Activated B cell treated with CpG ODN at 0.5 μM for 24 hours (primary cell): ENCODE measurements at regions of chr6 and their contacts with region 1.

Region 1: DNA sequence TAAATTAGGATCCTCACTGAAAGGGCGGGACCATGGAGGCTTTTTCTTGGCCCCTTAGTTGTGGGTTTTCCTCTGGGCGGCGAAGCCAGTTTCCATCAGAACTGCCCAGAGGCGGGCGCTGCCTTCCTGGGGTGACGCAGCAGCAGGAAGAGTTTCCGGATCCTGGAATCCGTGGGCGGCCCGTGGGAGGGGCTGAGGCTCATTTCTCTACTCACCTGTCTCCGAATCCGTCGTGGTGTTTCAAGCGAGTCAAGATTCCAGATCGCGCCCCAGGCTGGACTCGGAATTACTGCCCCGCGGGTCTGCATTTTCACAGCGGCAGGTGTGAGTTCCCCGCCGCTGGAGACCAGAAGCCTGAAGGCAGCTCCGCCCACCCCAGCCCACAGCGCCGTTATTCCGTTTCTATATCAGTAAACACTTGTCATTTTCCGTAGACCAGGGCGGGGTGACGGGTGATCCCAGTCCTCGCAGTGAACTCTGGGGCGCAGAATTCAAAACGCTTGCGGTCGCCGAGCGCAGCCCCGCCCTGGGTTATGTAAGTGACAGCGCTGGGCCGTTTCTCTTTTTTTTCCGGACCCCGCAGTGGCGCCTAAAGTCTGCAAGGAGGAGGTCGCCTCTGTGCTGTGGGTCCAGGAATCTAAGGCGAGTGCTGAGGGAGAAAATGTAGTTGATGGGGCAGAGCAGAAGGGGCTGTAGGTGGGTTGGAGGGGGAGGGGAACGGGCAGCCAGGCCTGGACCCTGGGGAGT is 27.2 kb upstream of the POU5F1 start:
- DNase-seq: peak; percentile 80
- ATAC-seq: peak; percentile 78
- H3K4me3 Mint-ChIP-seq: peak overlapping the region; percentile 96
- H3K27ac Mint-ChIP-seq: peak overlapping the region; percentile 99
- H3K4me1 Mint-ChIP-seq: peaks cover 49% of the 10 kb centered on the region
- H3K27me3 Mint-ChIP-seq: no peaks in the 10 kb centered on the region
- CTCF ChIP-seq: no peak

Region 2: GRCh38 chr6:31139599-31139998 is 58.1 kb before region 1 on chr6:
- CTCF ChIA-PET with region 1: interaction called, 37 read pairs
- POLR2A ChIA-PET with region 1: interaction called, 19 read pairs
- intact Hi-C with region 1: loop called (anchors 1 kb)
- DNase-seq: no peak
- ATAC-seq: no peak
- H3K4me3 Mint-ChIP-seq: no peak overlapping the region
- H3K27ac Mint-ChIP-seq: no peak overlapping the region
- H3K4me1 Mint-ChIP-seq: peaks cover 7% of the 10 kb centered on the region
- H3K27me3 Mint-ChIP-seq: no peaks in the 10 kb centered on the region
- CTCF ChIP-seq: no peak

Region 3: DNA sequence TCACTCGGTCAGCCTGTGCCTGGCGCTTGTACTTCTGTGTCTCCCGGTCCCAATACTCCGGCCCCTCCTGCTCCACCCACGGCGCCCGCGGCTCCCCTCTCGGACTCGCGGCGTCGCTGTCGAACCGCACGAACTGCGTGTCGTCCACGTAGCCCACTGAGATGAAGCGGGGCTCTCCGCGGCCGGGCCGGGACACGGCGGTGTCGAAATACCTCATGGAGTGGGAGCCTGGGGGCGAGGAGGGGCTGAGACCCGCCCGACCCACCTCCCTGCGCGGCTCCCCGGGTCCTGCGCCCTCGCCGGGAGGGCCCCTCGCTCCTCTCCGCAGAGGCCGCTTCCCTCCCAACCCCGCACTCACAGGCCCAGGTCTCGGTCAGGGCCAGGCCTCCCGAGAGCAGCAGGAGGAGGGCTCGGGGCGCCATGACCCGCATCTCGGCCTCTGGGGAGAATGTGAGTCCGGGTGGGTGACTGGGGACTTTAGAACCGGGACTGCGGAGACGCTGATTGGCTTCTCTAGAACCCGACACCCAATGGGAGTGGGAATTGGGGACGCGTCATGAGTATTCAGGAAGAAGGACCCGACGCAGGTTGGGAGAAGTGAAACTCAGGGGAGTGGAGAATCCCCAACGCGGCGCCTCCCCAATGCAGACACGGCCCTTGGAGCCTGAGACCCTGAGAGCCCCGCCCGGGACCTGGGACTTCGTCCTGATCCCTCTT is 74.1 kb after region 1 on chr6 and contains the start of gene HLA-C:
- CTCF ChIA-PET with region 1: interaction called, 4 read pairs
- POLR2A ChIA-PET with region 1: interaction called, 25 read pairs
- intact Hi-C with region 1: loop called (anchors 1 kb)
- DNase-seq: peak; percentile 77
- ATAC-seq: peak; percentile 87
- H3K4me3 Mint-ChIP-seq: peak within 1 kb of the TSS; percentile 90
- H3K27ac Mint-ChIP-seq: peak within 1 kb of the TSS; percentile 99
- H3K4me1 Mint-ChIP-seq: peaks cover 65% of the 10 kb centered on the region
- H3K27me3 Mint-ChIP-seq: no peaks in the 10 kb centered on the region
- CTCF ChIP-seq: no peak
- total RNA-seq, gene HLA-C: 762 and 793 TPM in 2 replicates

Region 4: DNA sequence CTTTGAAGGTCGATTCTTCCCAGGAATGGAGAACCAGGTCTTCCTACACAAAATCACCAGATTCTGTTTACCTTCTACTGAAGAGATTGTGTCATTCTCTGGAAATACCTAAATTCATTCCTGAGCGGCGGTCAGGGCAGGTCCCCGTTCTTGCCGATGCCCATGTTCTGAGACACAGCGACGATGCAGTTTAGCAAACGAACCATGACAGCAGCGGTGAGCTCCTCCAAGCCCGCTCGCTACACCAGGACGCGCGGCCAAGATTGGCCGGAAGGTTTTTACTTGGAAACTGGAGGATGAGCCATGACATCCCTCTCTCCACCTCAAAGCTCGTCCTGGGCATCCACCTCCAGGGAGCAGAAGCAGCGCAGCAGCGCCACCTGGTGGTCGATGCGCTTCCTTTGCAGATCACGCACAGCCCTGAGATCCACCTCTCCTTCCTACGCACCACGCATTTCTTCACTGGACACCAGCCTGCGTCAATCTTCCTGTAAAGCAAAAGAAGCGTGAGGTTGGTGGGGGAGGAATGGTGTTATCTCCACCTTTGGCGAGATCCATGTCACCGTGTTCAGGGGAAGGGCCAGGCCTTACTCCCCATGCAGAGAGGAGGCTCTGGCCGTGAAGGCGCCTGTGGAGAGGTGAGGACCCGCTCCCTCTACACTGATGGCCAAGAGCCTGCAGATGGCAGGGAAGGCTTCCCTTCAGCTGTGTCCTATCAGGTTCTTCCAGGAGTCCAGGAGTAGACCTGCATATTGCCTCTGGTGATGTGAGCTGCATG is 169.2 kb after region 1 on chr6:
- CTCF ChIA-PET with region 1: interaction called, 161 read pairs
- POLR2A ChIA-PET with region 1: interaction called, 55 read pairs
- intact Hi-C with region 1: loop called (anchors 1 kb)
- DNase-seq: peak; percentile 68
- ATAC-seq: peak; percentile 98
- H3K4me3 Mint-ChIP-seq: peak overlapping the region; percentile 84
- H3K27ac Mint-ChIP-seq: peak overlapping the region; percentile 43
- H3K4me1 Mint-ChIP-seq: peaks cover 8% of the 10 kb centered on the region
- H3K27me3 Mint-ChIP-seq: peaks cover 6% of the 10 kb centered on the region
- CTCF ChIP-seq: peak; percentile 61

Region 5: DNA sequence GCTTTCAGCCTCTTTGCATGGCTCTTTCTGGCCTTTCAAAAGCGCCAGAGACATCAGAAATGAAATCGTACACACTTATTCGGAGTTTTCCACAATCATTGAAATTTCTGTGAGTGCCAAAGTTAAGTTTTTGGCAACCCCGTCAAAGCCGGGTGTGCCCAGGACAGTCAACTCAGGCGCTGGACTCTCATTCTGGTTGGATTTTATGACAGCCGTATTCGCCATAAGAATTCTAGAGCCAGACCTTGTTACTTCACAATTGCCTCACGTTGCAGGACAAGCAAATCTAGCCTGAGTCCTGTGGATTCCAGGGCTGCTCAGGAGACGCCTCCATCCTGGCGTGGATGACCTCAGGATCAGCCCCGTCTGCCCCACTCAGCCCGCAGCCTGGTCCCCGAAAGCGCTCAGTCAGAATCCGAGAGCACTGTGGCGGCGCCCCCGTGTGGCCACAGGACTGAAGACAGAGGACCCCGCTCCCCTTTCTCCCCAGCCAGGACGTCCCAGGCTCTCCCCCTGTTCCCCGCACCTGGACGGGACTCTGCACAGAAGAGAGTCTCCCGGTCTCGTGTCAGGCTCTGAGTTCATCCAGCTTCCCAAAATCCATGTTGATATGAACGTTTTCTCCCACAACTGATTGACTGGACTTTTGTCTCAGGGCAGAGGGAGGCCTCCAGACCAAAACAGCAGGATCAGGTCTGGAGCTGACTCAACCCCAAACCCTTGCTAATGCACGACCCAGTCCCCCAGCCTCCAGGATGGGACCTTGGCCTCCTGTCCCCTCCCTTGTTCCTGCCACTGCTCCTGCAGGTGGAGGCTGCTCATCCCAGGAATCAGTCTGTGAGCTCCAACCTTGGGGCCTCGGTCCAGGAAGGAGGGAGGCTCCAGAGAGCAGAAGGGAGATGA is 243.9 kb after region 1 on chr6:
- CTCF ChIA-PET with region 1: no interaction called
- POLR2A ChIA-PET with region 1: no interaction called
- intact Hi-C with region 1: loop called (anchors 1 kb)
- DNase-seq: peak; percentile 81
- ATAC-seq: peak; percentile 98
- H3K4me3 Mint-ChIP-seq: no peak overlapping the region
- H3K27ac Mint-ChIP-seq: no peak overlapping the region
- H3K4me1 Mint-ChIP-seq: peaks cover 16% of the 10 kb centered on the region
- H3K27me3 Mint-ChIP-seq: peaks cover 24% of the 10 kb centered on the region
- CTCF ChIP-seq: peak; percentile 59